CD4-positive, alpha-beta T cell (primary cell): ENCODE measurements at regions of chr1 and their contacts with region 1.

Region 1: DNA sequence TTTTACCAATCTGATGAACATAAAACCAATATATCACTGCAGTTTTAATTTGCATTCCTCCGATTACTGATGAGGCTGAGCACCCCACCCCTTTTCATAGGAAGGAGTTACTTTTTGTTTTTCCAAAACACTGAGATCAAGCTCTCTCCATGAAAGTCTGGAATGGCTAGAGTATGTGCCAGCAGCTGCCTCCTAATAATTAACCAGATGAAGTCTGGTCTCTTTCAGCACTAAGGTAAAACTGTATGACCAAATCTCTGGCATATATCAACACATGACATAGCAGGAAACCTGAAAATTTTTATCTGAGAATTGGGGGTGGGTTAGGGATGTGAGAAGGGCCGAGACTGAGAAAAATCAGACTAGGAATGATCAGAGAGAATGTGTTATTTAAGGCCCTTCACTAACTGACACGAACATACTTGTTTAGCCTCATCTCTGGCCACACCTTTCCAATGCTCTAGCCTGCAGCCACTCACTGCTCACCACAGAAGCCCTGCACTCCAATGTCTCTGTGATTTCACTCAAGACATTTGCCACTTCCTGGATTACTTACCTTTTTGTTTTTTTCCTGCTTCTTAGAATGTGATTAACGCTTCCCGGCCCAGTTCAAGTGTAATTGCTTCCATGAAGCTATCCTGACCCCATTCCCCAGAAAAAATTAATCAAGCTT is 34.7 kb downstream of the WASF2 start:
- DNase-seq: peak in 9 of 14 experiments; percentile 6 to 63 (median 19)
- ATAC-seq: peak; percentile 80
- H3K4me3 ChIP-seq: peak overlapping the region; percentile 11
- H3K4me3 Mint-ChIP-seq: peak overlapping the region; percentile 30
- H3K27ac ChIP-seq: peak overlapping the region; percentile 46 to 53
- H3K27ac Mint-ChIP-seq: peak overlapping the region; percentile 75
- H3K4me1 ChIP-seq: peaks cover 22% of the 10 kb centered on the region
- H3K4me1 Mint-ChIP-seq: peaks cover 55% of the 10 kb centered on the region
- H3K27me3 ChIP-seq: no peaks in the 10 kb centered on the region
- H3K27me3 Mint-ChIP-seq: no peaks in the 10 kb centered on the region
- CTCF ChIP-seq: no peak

Region 2: GRCh38 chr1:25695090-25695770 is 1760.0 kb before region 1 on chr1:
- CTCF ChIA-PET with region 1: no interaction called
- POLR2A ChIA-PET with region 1: no interaction called
- intact Hi-C with region 1: loop called in 1 of 2 experiments (anchors 5 kb)
- DNase-seq: no peak
- ATAC-seq: no peak
- H3K4me3 ChIP-seq: no peak overlapping the region
- H3K4me3 Mint-ChIP-seq: no peak overlapping the region
- H3K27ac ChIP-seq: peak overlapping the region in 1 of 2 donors; percentile 39
- H3K27ac Mint-ChIP-seq: peak overlapping the region; percentile 74
- H3K4me1 ChIP-seq: peaks cover 48% of the 10 kb centered on the region
- H3K4me1 Mint-ChIP-seq: peaks cover 73% of the 10 kb centered on the region
- H3K27me3 ChIP-seq: no peaks in the 10 kb centered on the region
- H3K27me3 Mint-ChIP-seq: no peaks in the 10 kb centered on the region
- CTCF ChIP-seq: no peak

Region 3: DNA sequence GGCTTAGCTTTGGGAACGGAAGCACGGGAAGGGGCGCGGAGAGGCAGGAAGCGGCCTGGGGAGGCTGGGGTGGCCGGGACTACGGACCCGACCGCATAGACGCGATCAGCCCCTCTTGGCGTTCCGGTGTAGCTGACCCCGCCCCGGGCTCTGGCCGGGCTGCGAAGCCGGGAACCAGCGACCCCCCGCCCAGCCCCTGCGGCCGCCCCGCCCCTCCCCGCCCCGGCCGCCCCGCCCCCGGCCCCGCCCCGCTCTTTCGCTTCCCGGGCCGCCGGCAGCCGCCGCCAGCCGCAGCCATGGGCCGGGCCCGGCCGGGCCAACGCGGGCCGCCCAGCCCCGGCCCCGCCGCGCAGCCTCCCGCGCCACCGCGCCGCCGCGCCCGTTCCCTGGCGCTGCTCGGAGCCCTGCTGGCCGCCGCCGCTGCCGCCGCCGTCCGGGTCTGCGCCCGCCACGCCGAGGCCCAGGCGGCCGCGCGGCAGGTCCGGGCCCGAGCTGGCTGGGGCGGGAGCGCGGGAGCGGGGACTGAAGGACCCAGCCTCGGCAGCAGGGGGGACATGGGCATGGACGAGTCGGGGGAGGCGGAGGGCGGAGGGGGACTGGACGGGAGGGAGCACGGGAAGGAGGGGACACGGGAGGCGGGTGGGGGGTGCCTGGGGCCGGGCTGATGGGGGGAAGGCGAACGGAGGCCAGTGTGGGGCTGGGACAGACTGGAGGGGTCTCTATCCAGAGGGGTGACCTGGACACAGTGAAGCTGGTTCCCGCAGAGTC is 1655.2 kb before region 1 on chr1 and contains the start of gene SELENON:
- CTCF ChIA-PET with region 1: no interaction called
- POLR2A ChIA-PET with region 1: no interaction called
- intact Hi-C with region 1: no loop called
- DNase-seq: peak in 6 of 14 experiments; percentile 26 to 69 (median 52)
- ATAC-seq: peak; percentile 16
- H3K4me3 ChIP-seq: peak within 1 kb of the TSS; percentile 60
- H3K4me3 Mint-ChIP-seq: peak within 1 kb of the TSS; percentile 85
- H3K27ac ChIP-seq: peak within 1 kb of the TSS; percentile 18 to 33
- H3K27ac Mint-ChIP-seq: peak within 1 kb of the TSS; percentile 89
- H3K4me1 ChIP-seq: peaks cover 69% of the 10 kb centered on the region
- H3K4me1 Mint-ChIP-seq: peaks cover 80% of the 10 kb centered on the region
- H3K27me3 ChIP-seq: no peaks in the 10 kb centered on the region
- H3K27me3 Mint-ChIP-seq: no peaks in the 10 kb centered on the region
- CTCF ChIP-seq: no peak
- total RNA-seq, gene SELENON: 25.3 to 25.7 TPM

Region 4: DNA sequence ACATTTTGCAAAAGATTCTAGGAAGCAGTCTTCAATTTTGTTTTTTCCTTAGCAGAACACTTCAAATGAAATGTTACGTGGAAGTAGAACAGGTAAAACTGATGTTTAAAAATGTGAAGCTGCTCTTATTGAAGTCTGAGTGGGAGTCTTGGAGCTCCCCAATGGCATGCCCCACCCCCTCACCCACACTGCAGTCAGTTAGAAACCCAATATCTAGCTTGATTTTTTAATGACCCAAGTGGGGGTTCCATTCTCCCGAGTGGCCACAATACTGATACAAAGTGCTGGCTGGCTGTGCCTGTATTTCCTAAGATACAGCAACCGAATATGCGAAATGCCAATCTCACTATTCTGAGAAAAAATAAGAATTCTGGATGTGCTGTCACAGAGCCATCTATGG is 31.6 kb before region 1 on chr1:
- CTCF ChIA-PET with region 1: no interaction called
- POLR2A ChIA-PET with region 1: no interaction called
- intact Hi-C with region 1: loop called (anchors 5 to 10 kb)
- DNase-seq: no peak
- ATAC-seq: no peak
- H3K4me3 ChIP-seq: no peak overlapping the region
- H3K4me3 Mint-ChIP-seq: no peak overlapping the region
- H3K27ac ChIP-seq: no peak overlapping the region
- H3K27ac Mint-ChIP-seq: peak overlapping the region; percentile 70
- H3K4me1 ChIP-seq: peaks cover 46% of the 10 kb centered on the region
- H3K4me1 Mint-ChIP-seq: peaks cover 72% of the 10 kb centered on the region
- H3K27me3 ChIP-seq: no peaks in the 10 kb centered on the region
- H3K27me3 Mint-ChIP-seq: no peaks in the 10 kb centered on the region
- CTCF ChIP-seq: no peak

Region 5: GRCh38 chr1:27574871-27575831 is 119.9 kb after region 1 on chr1:
- CTCF ChIA-PET with region 1: no interaction called
- POLR2A ChIA-PET with region 1: no interaction called
- intact Hi-C with region 1: no loop called
- DNase-seq: peak in 1 of 14 experiments; percentile 37
- ATAC-seq: peak; percentile 43
- H3K4me3 ChIP-seq: no peak overlapping the region
- H3K4me3 Mint-ChIP-seq: peak overlapping the region; percentile 54
- H3K27ac ChIP-seq: no peak overlapping the region
- H3K27ac Mint-ChIP-seq: no peak overlapping the region
- H3K4me1 ChIP-seq: peaks cover 18% of the 10 kb centered on the region
- H3K4me1 Mint-ChIP-seq: peaks cover 53% of the 10 kb centered on the region
- H3K27me3 ChIP-seq: peaks cover 0 to 5% of the 10 kb centered on the region in 2 experiments
- H3K27me3 Mint-ChIP-seq: peaks cover 10% of the 10 kb centered on the region
- CTCF ChIP-seq: no peak